ENCODE measurements at regions of chr14 and their contacts with region 1.

Region 1: GRCh38 chr14:65377590-65377989 is 34.9 kb upstream of the FUT8 start:
- DNase-seq: peak; percentile 17
- ATAC-seq: no peak
- H3K4me3 ChIP-seq: no peak overlapping the region
- H3K27ac ChIP-seq: no peak overlapping the region
- H3K4me1 ChIP-seq: no peaks in the 10 kb centered on the region; the same call in 1 of the 2 replicates
- H3K27me3 ChIP-seq: no peaks in the 10 kb centered on the region; the same call in 1 of the 2 replicates
- CTCF ChIP-seq: no peak
- POLR2A ChIP-seq: no peak
- RAD21 ChIP-seq: no peak

Region 2: DNA sequence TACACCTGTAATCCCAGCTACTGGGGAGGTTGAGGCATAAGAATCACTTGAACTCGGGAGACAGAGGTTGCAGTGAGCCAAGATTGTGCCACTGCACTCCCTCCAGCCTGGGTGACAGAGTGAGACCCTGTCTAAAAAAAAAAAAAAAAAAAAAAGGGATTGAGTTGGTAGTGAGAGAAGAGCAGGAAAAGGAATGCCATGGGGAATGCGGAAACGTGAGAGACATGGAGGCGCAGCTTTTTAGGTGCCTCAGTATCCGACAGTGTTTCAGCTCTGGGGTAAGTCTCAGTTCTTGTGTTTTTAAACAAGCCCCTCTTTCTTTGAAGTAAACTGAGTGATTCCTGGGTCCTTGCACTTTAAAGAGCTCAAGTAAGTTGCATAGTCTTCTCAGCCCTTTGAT is 24.2 kb after region 1 on chr14:
- CTCF ChIA-PET with region 1: no interaction called
- POLR2A ChIA-PET with region 1: no interaction called
- dilution Hi-C with region 1: no loop called
- in situ Hi-C with region 1: no loop called
- intact Hi-C with region 1: loop called (anchors 1 kb)
- DNase-seq: no peak
- ATAC-seq: no peak
- H3K4me3 ChIP-seq: no peak overlapping the region
- H3K27ac ChIP-seq: no peak overlapping the region
- H3K4me1 ChIP-seq: no peaks in the 10 kb centered on the region
- H3K27me3 ChIP-seq: no peaks in the 10 kb centered on the region
- CTCF ChIP-seq: no peak
- POLR2A ChIP-seq: no peak
- RAD21 ChIP-seq: no peak

Region 3: GRCh38 chr14:65496178-65496993 is 118.8 kb after region 1 on chr14:
- CTCF ChIA-PET with region 1: no interaction called
- POLR2A ChIA-PET with region 1: no interaction called
- dilution Hi-C with region 1: no loop called
- in situ Hi-C with region 1: no loop called
- intact Hi-C with region 1: no loop called
- DNase-seq: peak; percentile 17
- ATAC-seq: no peak
- H3K4me3 ChIP-seq: no peak overlapping the region
- H3K27ac ChIP-seq: no peak overlapping the region
- H3K4me1 ChIP-seq: no peaks in the 10 kb centered on the region
- H3K27me3 ChIP-seq: no peaks in the 10 kb centered on the region
- CTCF ChIP-seq: no peak
- POLR2A ChIP-seq: no peak
- RAD21 ChIP-seq: no peak